ENCODE measurements at regions of chr2 and their contacts with region 1.

Region 1: DNA sequence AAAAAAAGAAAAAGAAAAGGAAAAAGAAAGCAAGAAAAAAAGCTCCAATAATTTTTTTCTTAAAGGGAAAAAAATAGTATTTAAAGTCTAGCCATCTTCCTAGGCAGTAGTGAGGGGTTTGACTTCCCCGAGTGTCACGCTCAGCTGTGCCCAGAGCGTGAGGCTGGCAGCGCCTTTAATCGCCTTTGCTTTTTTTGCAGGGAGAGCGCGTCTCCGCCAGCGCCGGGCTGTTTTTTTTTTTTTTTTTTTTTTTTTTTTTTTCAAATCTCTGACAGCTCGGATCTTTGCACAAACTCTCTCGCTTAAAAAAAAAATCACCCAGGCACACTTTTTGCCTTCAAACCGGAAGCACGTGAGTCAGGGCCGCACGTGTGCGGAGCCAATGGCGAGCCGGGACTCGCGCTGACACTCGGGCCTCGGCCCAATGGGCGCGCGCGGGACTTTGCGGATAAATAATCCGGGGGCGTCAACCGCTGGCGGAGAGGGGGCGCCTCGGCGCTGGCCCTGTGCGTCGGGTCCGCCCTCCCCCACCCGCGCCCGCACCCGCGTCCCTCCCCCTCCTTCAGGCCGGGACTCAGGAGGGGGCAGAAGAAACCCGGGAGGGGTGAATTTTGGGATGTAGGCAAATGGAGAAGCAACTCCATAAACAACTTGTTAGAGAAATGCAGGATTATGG is at the start of gene EN1:
- DNase-seq: peak; percentile 98
- H3K4me3 ChIP-seq: peak within 1 kb of the TSS; percentile 86
- H3K27ac ChIP-seq: peak within 1 kb of the TSS; percentile 88
- H3K4me1 ChIP-seq: peaks cover 12% of the 10 kb centered on the region
- H3K27me3 ChIP-seq: no peaks in the 10 kb centered on the region
- total RNA-seq, gene EN1: 7.0 and 9.1 TPM in 2 replicates

Region 2: GRCh38 chr2:118668431-118669424 is 178.9 kb before region 1 on chr2:
- in situ Hi-C with region 1: loop called (anchors 10 kb)
- DNase-seq: peak; percentile 98
- H3K4me3 ChIP-seq: peak overlapping the region; percentile 60
- H3K27ac ChIP-seq: peak overlapping the region; percentile 100
- H3K4me1 ChIP-seq: peaks cover 56% of the 10 kb centered on the region
- H3K27me3 ChIP-seq: no peaks in the 10 kb centered on the region

Region 3: GRCh38 chr2:118763797-118764196 is 83.8 kb before region 1 on chr2:
- in situ Hi-C with region 1: loop called (anchors 5 kb)
- DNase-seq: peak; percentile 84
- H3K4me3 ChIP-seq: peak overlapping the region; percentile 64
- H3K27ac ChIP-seq: no peak overlapping the region
- H3K4me1 ChIP-seq: 0 out of 2 replicates have a peak, but pooled peaks cover 3% of the 10 kb centered on the region
- H3K27me3 ChIP-seq: no peaks in the 10 kb centered on the region